Ascending aorta (tissue), 2 donors: ENCODE measurements at regions of chr7 and their contacts with region 1.

Region 1: GRCh38 chr7:836411-837400 is 4.4 kb downstream of the SUN1 start:
- DNase-seq: peak in 1 of 2 donors; percentile 77
- H3K4me3 ChIP-seq: peak overlapping the region in 1 of 2 donors; percentile 8
- H3K27ac ChIP-seq: peak overlapping the region; percentile 89 to 93
- H3K4me1 ChIP-seq: peaks cover 18 to 61% of the 10 kb centered on the region in 2 donors
- H3K27me3 ChIP-seq: no peaks in the 10 kb centered on the region
- CTCF ChIP-seq: peak; percentile 19 to 61 (median 49)

Region 2: GRCh38 chr7:763762-764161 is 72.9 kb before region 1 on chr7:
- intact Hi-C with region 1: no loop called
- DNase-seq: no peak
- H3K4me3 ChIP-seq: no peak overlapping the region
- H3K27ac ChIP-seq: no peak overlapping the region
- H3K4me1 ChIP-seq: no peaks in the 10 kb centered on the region
- H3K27me3 ChIP-seq: no peaks in the 10 kb centered on the region
- CTCF ChIP-seq: no peak

Region 3: GRCh38 chr7:776381-776780 is 60.3 kb before region 1 on chr7:
- intact Hi-C with region 1: no loop called
- DNase-seq: no peak
- H3K4me3 ChIP-seq: no peak overlapping the region
- H3K27ac ChIP-seq: no peak overlapping the region
- H3K4me1 ChIP-seq: peaks cover 0 to 9% of the 10 kb centered on the region in 2 donors
- H3K27me3 ChIP-seq: no peaks in the 10 kb centered on the region
- CTCF ChIP-seq: no peak

Region 4: DNA sequence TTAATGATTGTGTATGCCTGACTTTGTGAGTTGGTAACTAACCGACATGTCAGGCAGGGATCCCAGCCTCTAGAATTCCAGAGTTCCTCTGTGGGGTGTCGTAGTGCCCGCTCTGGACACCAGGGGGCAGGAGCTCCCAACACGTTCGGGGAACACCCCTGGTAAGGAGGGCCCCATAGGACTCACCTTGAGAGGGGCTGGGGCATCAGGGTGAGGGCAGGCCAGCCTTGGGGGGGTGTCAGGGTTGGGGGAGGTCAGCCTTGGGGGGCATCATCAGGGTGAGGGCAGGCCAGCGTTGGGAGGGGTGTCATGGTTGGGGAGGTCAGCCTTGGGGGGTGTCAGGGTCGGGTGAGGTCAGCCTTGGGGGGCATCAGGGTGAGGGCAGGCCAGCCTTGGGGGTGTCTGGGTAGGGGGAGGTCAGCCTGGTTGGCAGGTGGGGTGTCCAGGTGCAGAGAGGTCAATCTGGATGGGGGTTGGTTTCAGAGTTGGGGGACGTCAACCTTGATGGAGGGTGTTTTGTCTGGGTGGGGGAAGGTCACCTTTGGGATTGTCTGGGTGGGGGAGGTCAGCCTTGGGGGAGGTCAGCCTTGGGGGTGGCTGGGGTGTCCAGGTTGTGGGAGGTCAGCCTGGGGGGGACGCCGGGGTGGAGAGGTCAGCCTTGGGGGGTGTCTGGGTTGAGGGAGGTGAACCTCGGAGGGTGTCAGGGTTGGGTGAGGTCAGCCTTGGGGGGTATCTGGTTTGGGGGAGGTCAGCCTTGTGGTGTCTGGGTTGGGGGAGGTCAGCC is 50.0 kb before region 1 on chr7:
- intact Hi-C with region 1: loop called (anchors 2 kb)
- DNase-seq: peak in 1 of 2 donors; percentile 82
- H3K4me3 ChIP-seq: no peak overlapping the region
- H3K27ac ChIP-seq: no peak overlapping the region
- H3K4me1 ChIP-seq: peaks cover 0 to 4% of the 10 kb centered on the region in 2 donors
- H3K27me3 ChIP-seq: no peaks in the 10 kb centered on the region
- CTCF ChIP-seq: peak; percentile 91 to 95 (median 95)

Region 5: DNA sequence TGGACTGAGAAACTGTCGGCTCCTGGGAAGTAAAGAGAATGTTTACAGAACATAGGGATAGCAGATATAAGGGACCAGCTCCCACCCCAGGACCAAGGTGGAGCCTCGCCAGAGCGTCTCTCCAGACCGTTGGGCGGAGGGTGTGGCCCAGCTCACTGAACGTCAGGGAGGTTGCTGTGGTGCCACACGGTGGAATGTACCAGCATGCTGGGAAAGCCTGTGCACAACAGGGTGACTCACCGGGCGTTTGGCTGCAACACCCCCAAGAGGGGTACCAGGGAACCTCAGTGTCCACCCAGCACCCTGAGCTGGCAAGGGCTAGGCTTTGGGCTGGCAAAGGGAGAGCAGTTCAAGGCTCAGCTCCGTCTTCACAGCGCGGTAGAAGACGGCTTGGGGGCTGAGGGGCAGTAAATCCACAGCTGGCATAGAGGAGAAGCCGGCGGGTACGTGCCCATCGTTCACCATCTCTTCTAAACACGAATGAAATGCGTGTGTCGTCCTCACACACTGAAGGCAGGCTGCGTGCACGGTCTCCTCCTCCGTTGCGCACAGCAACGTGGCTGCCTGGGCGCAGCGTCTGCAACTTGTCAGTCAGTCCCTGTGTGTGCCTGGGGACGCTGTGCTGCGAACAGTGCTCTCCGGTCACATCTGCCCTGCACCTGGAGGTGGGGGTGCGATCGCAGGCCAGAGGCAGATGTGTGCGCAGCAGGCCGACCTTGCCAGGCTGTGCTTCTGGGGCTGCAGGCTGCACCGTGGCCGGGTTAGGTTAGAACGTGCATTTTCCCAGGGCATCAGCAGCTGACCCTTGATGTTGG is 31.2 kb after region 1 on chr7:
- intact Hi-C with region 1: loop called (anchors 1 kb)
- DNase-seq: peak; percentile 63 to 94
- H3K4me3 ChIP-seq: peak overlapping the region; percentile 32 to 37
- H3K27ac ChIP-seq: peak overlapping the region; percentile 92 to 95
- H3K4me1 ChIP-seq: peaks cover 9 to 30% of the 10 kb centered on the region in 2 donors
- H3K27me3 ChIP-seq: no peaks in the 10 kb centered on the region
- CTCF ChIP-seq: peak in 2 of 3 experiments; percentile 18 to 21